ENCODE measurements at regions of chr1 and their contacts with region 1.

Region 1: DNA sequence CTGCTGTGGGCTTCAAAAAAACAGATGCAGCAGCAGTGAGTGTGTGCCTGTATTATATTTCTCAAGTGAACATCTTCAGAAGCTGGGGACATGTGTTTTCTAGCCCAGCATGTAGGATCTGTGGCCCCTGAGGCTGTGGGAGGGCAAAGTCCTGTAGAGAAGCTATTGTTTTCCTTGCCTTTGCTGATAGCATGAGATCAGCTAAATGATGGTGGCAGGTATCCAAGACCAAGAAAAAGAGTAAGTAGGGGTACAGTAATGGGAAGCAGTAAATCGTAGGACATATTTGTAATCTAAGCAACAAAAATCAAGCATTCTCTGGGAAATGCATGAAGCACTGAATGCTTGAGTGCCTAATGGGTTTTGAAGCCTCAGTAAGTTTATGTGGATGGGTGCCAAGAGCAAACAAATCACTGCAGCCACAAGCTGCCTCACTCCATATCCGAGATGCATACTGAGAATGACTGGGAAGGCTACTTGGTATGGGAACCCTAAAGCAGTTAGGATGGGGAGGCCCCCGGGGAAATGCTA is 98.3 kb downstream of the CD58 start:
- DNase-seq: peak; percentile 62
- ATAC-seq: no peak
- H3K4me3 ChIP-seq: no peak overlapping the region
- H3K27ac ChIP-seq: peak overlapping the region; percentile 58
- H3K4me1 ChIP-seq: peaks cover 100% of the 10 kb centered on the region
- H3K27me3 ChIP-seq: no peaks in the 10 kb centered on the region
- CTCF ChIP-seq: no peak
- EP300 ChIP-seq: no peak; a peak in 1 of 4 replicates
- POLR2A ChIP-seq: no peak
- RAD21 ChIP-seq: no peak

Region 2: GRCh38 chr1:116139592-116140134 is 332.8 kb before region 1 on chr1:
- CTCF ChIA-PET with region 1: no interaction called
- POLR2A ChIA-PET with region 1: interaction called, 11 read pairs
- in situ Hi-C with region 1: no loop called
- intact Hi-C with region 1: no loop called
- DNase-seq: no peak
- ATAC-seq: no peak
- H3K4me3 ChIP-seq: no peak overlapping the region
- H3K27ac ChIP-seq: no peak overlapping the region
- H3K4me1 ChIP-seq: peaks cover 13% of the 10 kb centered on the region
- H3K27me3 ChIP-seq: no peaks in the 10 kb centered on the region
- CTCF ChIP-seq: no peak
- EP300 ChIP-seq: no peak
- POLR2A ChIP-seq: no peak
- RAD21 ChIP-seq: no peak

Region 3: DNA sequence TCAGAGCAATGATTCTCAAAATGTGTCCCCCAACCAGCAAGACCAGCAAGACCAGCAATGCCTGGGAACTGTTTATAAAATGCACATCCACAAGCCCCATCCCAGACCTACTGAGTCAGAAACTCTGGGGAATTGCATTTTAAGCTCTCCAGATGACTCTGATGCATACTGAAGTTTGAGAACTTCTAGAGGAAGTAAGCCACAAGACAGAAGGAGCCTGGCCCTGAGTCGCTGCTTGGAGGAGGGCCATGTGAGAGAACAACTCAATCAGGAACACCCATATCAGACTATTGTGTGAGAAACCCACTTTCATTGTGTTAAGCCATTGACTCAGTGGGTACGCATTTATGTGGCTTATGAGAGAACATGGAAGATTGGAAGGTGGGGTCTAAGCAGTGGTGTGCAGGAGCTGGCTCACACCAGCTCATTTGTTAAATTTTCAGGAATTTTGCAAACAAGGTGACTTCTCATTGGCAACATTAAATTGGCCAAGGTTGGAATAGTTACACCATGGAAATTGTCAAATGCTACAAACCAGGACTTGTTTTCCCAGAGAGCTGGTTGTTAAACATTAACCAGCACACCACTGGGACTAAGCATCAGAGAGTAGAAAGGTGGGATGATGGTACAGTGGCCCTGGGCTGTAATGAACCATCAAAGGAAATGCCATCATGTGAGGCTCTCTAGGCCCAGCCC is 60.6 kb before region 1 on chr1:
- CTCF ChIA-PET with region 1: no interaction called
- POLR2A ChIA-PET with region 1: interaction called, 129 read pairs
- in situ Hi-C with region 1: no loop called
- intact Hi-C with region 1: loop called (anchors 5 kb)
- DNase-seq: peak; percentile 97
- ATAC-seq: peak; percentile 93
- H3K4me3 ChIP-seq: peak overlapping the region in 1 of 3 experiments; percentile 23; a peak in 1 of 6 replicates
- H3K27ac ChIP-seq: peak overlapping the region; percentile 74
- H3K4me1 ChIP-seq: peaks cover 62% of the 10 kb centered on the region
- H3K27me3 ChIP-seq: no peaks in the 10 kb centered on the region
- CTCF ChIP-seq: no peak
- EP300 ChIP-seq: peak in 1 of 2 experiments; percentile 60; a peak in 2 of 4 replicates
- POLR2A ChIP-seq: no peak
- RAD21 ChIP-seq: no peak

Region 4: DNA sequence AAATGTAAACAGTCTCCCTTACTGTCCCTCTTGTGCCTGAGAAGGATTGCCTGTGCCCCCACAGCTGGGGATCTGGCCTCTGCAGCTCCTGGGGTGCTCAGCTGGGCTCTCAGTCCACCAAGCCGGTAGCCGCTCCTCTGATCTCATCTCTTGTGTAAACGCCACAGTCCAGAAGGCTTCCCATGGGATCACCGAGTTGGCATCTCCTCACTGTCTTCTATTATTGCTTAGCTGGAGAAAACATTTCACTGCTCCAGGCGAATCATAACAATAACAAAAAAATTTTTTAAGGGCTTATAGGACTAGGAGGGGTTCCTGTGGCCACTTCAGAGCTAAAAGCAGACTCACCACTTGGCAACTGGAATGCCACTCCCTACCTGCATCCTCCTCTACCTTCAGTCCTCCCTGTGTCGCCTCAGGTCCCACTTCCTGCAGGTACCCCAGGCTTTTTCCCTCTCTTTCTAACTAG is 23.6 kb before region 1 on chr1:
- CTCF ChIA-PET with region 1: no interaction called
- POLR2A ChIA-PET with region 1: interaction called, 32 read pairs
- in situ Hi-C with region 1: no loop called
- intact Hi-C with region 1: loop called (anchors 2 kb)
- DNase-seq: peak; percentile 56
- ATAC-seq: peak; percentile 92
- H3K4me3 ChIP-seq: no peak overlapping the region; a peak in 1 of 6 replicates
- H3K27ac ChIP-seq: peak overlapping the region; percentile 10
- H3K4me1 ChIP-seq: peaks cover 61% of the 10 kb centered on the region
- H3K27me3 ChIP-seq: no peaks in the 10 kb centered on the region
- CTCF ChIP-seq: no peak
- EP300 ChIP-seq: no peak
- POLR2A ChIP-seq: no peak
- RAD21 ChIP-seq: no peak

Region 5: GRCh38 chr1:116514708-116515525 is 42.4 kb after region 1 on chr1:
- CTCF ChIA-PET with region 1: no interaction called
- POLR2A ChIA-PET with region 1: no interaction called
- in situ Hi-C with region 1: no loop called
- intact Hi-C with region 1: no loop called
- DNase-seq: no peak
- ATAC-seq: no peak
- H3K4me3 ChIP-seq: no peak overlapping the region
- H3K27ac ChIP-seq: no peak overlapping the region
- H3K4me1 ChIP-seq: peaks cover 9% of the 10 kb centered on the region
- H3K27me3 ChIP-seq: no peaks in the 10 kb centered on the region
- CTCF ChIP-seq: no peak
- EP300 ChIP-seq: no peak
- POLR2A ChIP-seq: no peak
- RAD21 ChIP-seq: no peak

Region 6: DNA sequence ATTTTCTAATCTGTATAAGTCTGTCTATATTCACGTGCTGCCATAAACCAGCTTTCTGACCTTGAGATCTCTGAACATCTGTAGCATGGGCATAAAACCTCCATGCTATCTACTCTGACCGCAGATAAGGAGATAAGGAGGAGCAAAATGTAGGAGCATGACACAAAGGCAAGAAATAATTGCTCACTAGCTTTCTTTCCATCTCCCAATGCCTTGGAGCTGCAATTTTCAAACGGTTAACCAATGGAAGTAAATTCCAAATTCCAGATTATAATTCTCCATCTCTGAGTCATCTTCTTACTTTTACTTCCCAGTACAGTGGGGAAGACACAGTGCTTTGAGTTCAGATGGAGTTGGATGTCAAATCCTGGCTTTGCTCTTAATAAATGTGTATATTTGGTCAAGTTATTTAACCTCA is 56.7 kb after region 1 on chr1:
- CTCF ChIA-PET with region 1: no interaction called
- POLR2A ChIA-PET with region 1: no interaction called
- in situ Hi-C with region 1: no loop called
- intact Hi-C with region 1: no loop called
- DNase-seq: no peak
- ATAC-seq: no peak
- H3K4me3 ChIP-seq: no peak overlapping the region
- H3K27ac ChIP-seq: peak overlapping the region; percentile 2
- H3K4me1 ChIP-seq: peaks cover 37% of the 10 kb centered on the region
- H3K27me3 ChIP-seq: no peaks in the 10 kb centered on the region
- CTCF ChIP-seq: no peak
- EP300 ChIP-seq: no peak
- POLR2A ChIP-seq: no peak
- RAD21 ChIP-seq: no peak

Region 7: DNA sequence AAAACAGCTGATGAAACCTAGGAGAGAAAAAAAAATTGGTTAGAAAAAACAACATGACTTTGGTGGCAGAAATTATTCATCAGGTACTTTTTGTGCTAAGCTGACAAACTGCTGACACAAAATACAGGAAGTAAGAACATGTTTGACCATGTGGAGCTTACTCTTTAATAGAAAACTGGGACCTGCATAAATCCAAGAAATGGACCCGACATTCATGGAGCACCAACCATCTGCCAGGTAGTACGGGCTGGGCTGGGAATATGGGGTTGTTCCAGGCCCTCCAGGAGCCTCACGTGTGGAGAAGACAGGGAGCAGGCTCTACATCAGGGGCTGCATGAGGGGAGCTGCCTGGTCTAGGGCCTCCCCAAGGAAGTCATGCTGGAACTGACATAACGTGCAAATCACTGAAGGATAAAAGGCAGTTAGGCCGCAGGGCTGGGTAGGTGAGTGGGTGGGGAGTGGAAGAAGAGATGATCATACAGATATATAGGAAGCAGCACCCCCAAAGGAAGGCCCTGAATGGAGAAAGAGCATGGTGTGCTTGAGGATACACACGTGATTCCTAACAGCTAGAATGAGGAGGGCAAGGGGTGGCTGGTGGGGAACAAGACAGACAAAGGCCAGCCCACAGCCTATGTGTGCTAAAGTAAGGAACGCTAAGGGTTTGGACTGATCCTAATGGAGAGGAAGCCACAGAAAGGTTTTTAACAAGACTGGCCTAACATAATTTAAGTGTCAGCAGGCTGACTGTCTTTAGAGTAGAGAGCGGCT is 72.3 kb after region 1 on chr1:
- CTCF ChIA-PET with region 1: no interaction called
- POLR2A ChIA-PET with region 1: no interaction called
- in situ Hi-C with region 1: no loop called
- intact Hi-C with region 1: no loop called
- DNase-seq: no peak
- ATAC-seq: no peak
- H3K4me3 ChIP-seq: no peak overlapping the region
- H3K27ac ChIP-seq: no peak overlapping the region
- H3K4me1 ChIP-seq: peaks cover 7% of the 10 kb centered on the region; the same call in 1 of the 2 replicates
- H3K27me3 ChIP-seq: no peaks in the 10 kb centered on the region
- CTCF ChIP-seq: no peak
- EP300 ChIP-seq: no peak
- POLR2A ChIP-seq: no peak
- RAD21 ChIP-seq: no peak

Region 8: GRCh38 chr1:116559304-116559761 is 86.8 kb after region 1 on chr1:
- CTCF ChIA-PET with region 1: no interaction called
- POLR2A ChIA-PET with region 1: no interaction called
- in situ Hi-C with region 1: no loop called
- intact Hi-C with region 1: no loop called
- DNase-seq: no peak
- ATAC-seq: no peak
- H3K4me3 ChIP-seq: no peak overlapping the region
- H3K27ac ChIP-seq: no peak overlapping the region
- H3K4me1 ChIP-seq: no peaks in the 10 kb centered on the region
- H3K27me3 ChIP-seq: no peaks in the 10 kb centered on the region
- CTCF ChIP-seq: no peak
- EP300 ChIP-seq: no peak
- POLR2A ChIP-seq: no peak
- RAD21 ChIP-seq: no peak